Left colon (tissue), 2 donors: ENCODE measurements at regions of chr12 and their contacts with region 1.

Region 1: GRCh38 chr12:59113831-59114615 is 193.7 kb upstream of the LRIG3 start:
- DNase-seq: peak; percentile 48 to 78
- ATAC-seq: peak; percentile 91

Region 2: GRCh38 chr12:59131462-59131861 is 17.4 kb after region 1 on chr12:
- intact Hi-C with region 1: no loop called
- DNase-seq: no peak
- ATAC-seq: no peak

Region 3: GRCh38 chr12:59149997-59150642 is 36.1 kb after region 1 on chr12:
- intact Hi-C with region 1: loop called in 1 of 2 experiments (anchors 5 kb)
- DNase-seq: no peak
- ATAC-seq: peak; percentile 99